ENCODE measurements at regions of chr1 and their contacts with region 1.

Region 1: GRCh38 chr1:24558902-24559791 is 3.3 kb downstream of the NCMAP start:
- DNase-seq: peak in 2 of 3 donors; percentile 64 to 73
- ATAC-seq: peak; percentile 34 to 79 (median 63)
- H3K4me3 ChIP-seq: no peak overlapping the region
- H3K27ac ChIP-seq: no peak overlapping the region
- H3K4me1 ChIP-seq: peaks cover 0 to 4% (median 0%) of the 10 kb centered on the region in 4 donors
- H3K27me3 ChIP-seq: no peaks in the 10 kb centered on the region
- CTCF ChIP-seq: no peak
- POLR2A ChIP-seq: no peak

Region 2: GRCh38 chr1:24491577-24492360 is 67.4 kb before region 1 on chr1:
- intact Hi-C with region 1: no loop called
- DNase-seq: peak in 1 of 3 donors; percentile 8
- ATAC-seq: no peak
- H3K4me3 ChIP-seq: no peak overlapping the region
- H3K27ac ChIP-seq: no peak overlapping the region
- H3K4me1 ChIP-seq: no peaks in the 10 kb centered on the region
- H3K27me3 ChIP-seq: no peaks in the 10 kb centered on the region
- CTCF ChIP-seq: no peak
- POLR2A ChIP-seq: no peak

Region 3: GRCh38 chr1:24635195-24635843 is 76.2 kb after region 1 on chr1:
- intact Hi-C with region 1: loop called in 1 of 2 experiments (anchors 10 kb)
- DNase-seq: no peak
- ATAC-seq: peak; percentile 86 to 91 (median 88)
- H3K4me3 ChIP-seq: no peak overlapping the region
- H3K27ac ChIP-seq: no peak overlapping the region
- H3K4me1 ChIP-seq: peaks cover 0 to 4% (median 0%) of the 10 kb centered on the region in 4 donors
- H3K27me3 ChIP-seq: no peaks in the 10 kb centered on the region
- CTCF ChIP-seq: peak; percentile 59 to 72 (median 64)
- POLR2A ChIP-seq: no peak

Measured in right lobe of liver (tissue), 6 donors.